Common myeloid progenitor, CD34-positive (primary cell): ENCODE measurements at regions of chr17 and their contacts with region 1.

Region 1: DNA sequence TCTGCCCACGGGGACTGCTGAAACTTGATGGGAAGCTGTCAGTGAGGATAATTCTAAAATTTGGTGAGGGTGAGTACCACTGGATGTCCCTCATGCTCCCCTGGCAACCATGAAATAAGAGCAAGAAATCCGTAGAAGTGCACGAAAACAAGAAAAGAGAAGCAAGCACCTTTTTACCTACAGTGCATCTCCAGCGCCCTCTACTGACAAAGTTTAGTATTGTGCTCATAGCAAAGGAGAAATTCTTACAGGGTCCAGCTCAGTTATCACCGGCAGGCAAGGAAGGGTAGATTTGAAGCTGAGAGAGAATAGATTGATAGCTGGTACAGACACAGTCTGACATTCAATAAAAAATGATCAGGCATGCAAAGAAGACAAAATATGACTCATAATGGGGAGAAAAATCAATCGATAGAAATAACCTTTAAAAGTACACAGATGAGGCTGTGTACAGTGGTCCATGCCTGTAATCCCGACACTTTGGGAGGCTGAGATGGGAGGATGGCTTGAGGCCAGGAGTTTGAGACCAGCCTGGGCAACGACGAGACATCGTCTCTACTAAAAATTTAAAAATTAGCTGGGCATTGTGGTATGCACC is 28.3 kb upstream of the TEX2 start:
- DNase-seq: peak; percentile 20 to 34 (median 29)
- H3K4me3 ChIP-seq: no peak overlapping the region
- H3K27ac ChIP-seq: no peak overlapping the region
- H3K4me1 ChIP-seq: peaks cover 0 to 5% (median 3%) of the 10 kb centered on the region in 4 experiments
- H3K27me3 ChIP-seq: no peaks in the 10 kb centered on the region

Region 2: GRCh38 chr17:64202675-64203344 is 88.5 kb before region 1 on chr17:
- CTCF ChIA-PET with region 1: no interaction called
- POLR2A ChIA-PET with region 1: no interaction called
- DNase-seq: no peak
- H3K4me3 ChIP-seq: no peak overlapping the region
- H3K27ac ChIP-seq: no peak overlapping the region
- H3K4me1 ChIP-seq: peaks cover 7 to 17% (median 13%) of the 10 kb centered on the region in 4 experiments
- H3K27me3 ChIP-seq: no peaks in the 10 kb centered on the region

Region 3: GRCh38 chr17:64244165-64244564 is 47.2 kb before region 1 on chr17:
- CTCF ChIA-PET with region 1: no interaction called
- POLR2A ChIA-PET with region 1: no interaction called
- DNase-seq: no peak
- H3K4me3 ChIP-seq: no peak overlapping the region
- H3K27ac ChIP-seq: no peak overlapping the region
- H3K4me1 ChIP-seq: peaks cover 0 to 15% (median 10%) of the 10 kb centered on the region in 4 experiments
- H3K27me3 ChIP-seq: no peaks in the 10 kb centered on the region

Region 4: DNA sequence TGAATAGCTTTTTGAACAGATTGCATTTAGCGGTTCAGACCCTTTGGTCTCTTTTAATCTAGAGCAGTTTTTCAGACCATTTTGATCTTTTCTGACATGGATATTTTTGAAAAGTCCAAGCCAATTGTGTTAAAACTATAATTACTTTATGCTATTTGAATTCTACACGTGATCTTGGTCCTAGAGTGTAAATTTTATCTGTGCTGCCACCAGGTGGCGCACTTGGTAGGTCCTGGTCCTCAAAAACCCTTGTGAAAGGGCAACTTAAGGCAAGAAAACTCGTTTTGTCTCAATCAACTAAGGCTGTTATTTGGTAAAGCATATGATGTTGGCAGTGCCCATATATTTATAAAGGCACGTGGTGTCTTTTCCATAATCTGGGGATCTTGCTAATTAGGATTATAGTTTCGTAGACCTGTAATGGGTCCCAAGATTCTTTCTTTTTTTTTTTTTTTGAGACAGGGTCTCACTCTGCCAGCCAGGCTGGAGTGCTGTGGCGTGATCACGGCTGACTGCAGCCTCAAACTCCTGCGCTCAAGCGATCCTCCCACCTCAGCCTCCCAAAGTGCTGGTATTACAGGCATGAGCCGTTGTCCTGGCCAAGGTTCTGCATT is 15.6 kb after region 1 on chr17:
- CTCF ChIA-PET with region 1: interaction called, 15 read pairs
- POLR2A ChIA-PET with region 1: no interaction called
- DNase-seq: peak; percentile 76 to 90 (median 84)
- H3K4me3 ChIP-seq: no peak overlapping the region
- H3K27ac ChIP-seq: no peak overlapping the region
- H3K4me1 ChIP-seq: no peaks in the 10 kb centered on the region
- H3K27me3 ChIP-seq: no peaks in the 10 kb centered on the region

Region 5: GRCh38 chr17:64658931-64659330 is 367.6 kb after region 1 on chr17:
- CTCF ChIA-PET with region 1: no interaction called
- POLR2A ChIA-PET with region 1: no interaction called
- DNase-seq: peak; percentile 32 to 43 (median 38)
- H3K4me3 ChIP-seq: no peak overlapping the region
- H3K27ac ChIP-seq: no peak overlapping the region
- H3K4me1 ChIP-seq: peaks cover 6 to 32% (median 20%) of the 10 kb centered on the region in 4 experiments
- H3K27me3 ChIP-seq: no peaks in the 10 kb centered on the region